Astrocyte of the cerebellum (primary cell): ENCODE measurements at regions of chr11 and their contacts with region 1.

Region 1: DNA sequence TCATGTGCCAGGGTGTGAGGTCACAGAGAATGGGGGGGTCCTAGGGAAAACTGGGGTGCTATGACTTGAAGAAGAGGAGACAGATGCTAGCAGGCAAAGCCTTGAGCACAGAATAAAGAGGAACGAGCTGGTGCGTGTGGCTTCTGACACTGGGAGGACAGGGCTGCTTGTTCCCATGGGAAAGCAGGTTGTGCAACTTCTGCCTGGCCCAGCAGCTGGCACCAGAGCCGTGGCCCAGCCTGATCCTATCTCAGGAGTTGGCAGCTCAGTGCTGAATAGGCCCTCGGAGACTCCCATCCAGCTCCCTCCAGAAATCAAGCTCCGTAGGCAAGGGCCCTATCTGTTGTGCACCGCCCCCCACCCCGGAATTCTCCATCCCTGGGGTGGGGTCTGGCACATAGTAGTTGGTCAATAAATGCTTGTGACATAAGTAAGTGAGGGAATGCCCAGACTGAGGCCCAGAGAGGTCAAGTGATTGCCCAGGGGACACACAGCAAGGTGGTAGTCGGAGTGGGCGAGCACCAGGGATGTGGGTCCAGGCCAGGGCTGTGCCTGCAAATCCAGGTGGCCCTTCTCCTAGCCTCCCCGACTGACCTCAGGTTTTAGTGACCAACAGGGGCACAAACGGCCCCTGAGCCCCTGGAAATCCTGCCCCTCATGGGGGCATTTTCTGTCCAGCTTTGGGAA is 19.5 kb upstream of the FADD start:
- DNase-seq: no peak
- H3K4me3 ChIP-seq: no peak overlapping the region
- CTCF ChIP-seq: no peak

Region 2: GRCh38 chr11:69909561-69910496 is 273.8 kb before region 1 on chr11:
- in situ Hi-C with region 1: no loop called
- DNase-seq: no peak
- H3K4me3 ChIP-seq: no peak overlapping the region
- CTCF ChIP-seq: peak; percentile 68

Region 3: DNA sequence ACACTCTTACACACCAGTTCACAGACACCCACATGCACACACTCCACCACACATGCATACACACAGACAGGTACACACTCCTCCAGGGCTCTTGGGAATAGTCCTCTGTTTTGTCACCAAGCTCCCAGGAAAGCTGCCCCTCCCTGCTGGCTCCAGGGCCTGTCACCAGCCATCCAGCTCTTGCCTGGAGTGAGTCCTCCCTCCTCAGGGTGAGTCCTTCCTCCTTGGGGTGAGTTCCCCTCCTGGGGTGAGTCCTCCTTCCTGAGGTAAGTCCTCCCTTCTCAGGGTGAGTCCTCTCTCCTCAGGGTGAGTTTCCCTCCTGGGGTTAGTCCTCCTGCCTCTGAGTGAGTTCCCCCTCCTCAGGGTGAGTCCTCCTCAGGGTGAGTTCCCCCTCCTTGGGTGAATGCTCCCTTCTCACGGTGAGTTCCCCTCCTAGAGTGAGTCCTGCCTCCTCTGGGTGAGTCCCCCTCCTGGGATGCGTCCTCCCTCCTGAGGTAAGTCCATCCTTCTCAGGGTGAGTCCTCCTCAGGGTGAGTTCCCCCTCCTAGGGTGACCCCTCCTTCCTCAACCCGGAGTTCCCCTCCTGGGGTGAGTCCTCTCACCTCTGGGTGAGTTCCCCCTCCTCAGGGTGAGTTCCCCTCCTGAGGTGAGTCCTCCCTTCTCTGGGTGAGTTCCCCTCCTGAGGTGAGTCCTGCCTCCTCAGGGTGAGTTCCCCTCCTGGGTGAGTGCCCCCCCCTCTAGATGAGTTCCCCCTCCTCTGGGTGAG is 263.8 kb before region 1 on chr11:
- in situ Hi-C with region 1: loop called (anchors 5 kb)
- DNase-seq: no peak
- H3K4me3 ChIP-seq: no peak overlapping the region
- CTCF ChIP-seq: no peak

Region 4: GRCh38 chr11:70099578-70100279 is 83.9 kb before region 1 on chr11:
- in situ Hi-C with region 1: loop called (anchors 5 kb)
- DNase-seq: no peak
- H3K4me3 ChIP-seq: no peak overlapping the region
- CTCF ChIP-seq: no peak